ENCODE measurements at regions of chr2 and their contacts with region 1.

Region 1: DNA sequence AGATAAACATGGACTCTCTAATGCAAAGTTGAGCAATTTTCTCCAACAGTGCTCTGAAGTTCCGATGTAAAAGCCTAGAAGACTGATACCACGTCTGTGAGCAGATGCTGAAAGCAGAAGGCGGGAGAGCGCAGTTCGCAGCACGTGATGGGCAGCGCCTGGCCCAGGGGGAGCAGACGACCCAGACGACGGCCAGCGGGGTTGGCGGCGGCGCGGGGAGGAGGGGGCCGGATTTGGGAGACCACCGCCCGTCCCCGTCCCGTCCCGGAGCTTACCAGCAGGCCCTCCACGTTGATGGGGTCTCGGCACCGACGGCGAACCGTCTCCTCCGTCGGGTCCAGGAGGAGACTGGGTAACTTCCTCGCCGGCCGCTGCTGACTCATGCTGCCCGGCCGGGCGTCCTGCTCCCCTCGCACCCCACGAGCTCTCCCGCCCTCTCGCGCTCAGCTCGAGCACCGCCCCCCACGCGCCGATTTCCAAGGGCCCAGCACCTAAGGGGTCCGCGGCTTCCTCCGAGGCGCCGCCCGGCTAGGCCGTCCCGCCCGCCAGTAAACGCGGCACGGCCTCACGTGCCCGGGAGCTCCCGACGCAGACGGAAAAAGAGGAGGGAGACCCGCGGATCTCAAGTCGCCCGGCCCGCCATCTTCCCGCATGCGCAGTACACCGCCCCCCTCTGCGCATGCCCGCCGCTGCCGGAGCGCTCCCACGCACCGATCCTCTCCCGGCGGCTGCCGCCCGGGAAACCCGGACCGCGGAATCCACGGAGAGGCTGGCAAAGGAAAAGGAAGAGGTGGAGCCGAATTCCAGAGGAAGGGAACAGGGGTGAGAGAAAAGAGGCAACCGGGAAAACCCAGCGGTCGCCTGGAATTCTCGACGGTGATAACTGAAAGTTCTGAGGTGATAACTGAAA is at the start of gene E2F6:
- DNase-seq: peak; percentile 89
- H3K4me3 Mint-ChIP-seq: peak within 1 kb of the TSS; percentile 91
- H3K27ac Mint-ChIP-seq: peak within 1 kb of the TSS; percentile 83
- H3K4me1 Mint-ChIP-seq: peaks cover 40% of the 10 kb centered on the region
- H3K27me3 Mint-ChIP-seq: no peaks in the 10 kb centered on the region
- total RNA-seq, gene E2F6: 8.7 to 9.4 TPM

Region 2: GRCh38 chr2:11214770-11215169 is 251.0 kb before region 1 on chr2:
- CTCF ChIA-PET with region 1: no interaction called
- intact Hi-C with region 1: no loop called
- DNase-seq: no peak
- H3K4me3 Mint-ChIP-seq: no peak overlapping the region
- H3K27ac Mint-ChIP-seq: no peak overlapping the region
- H3K4me1 Mint-ChIP-seq: no peaks in the 10 kb centered on the region
- H3K27me3 Mint-ChIP-seq: no peaks in the 10 kb centered on the region

Region 3: DNA sequence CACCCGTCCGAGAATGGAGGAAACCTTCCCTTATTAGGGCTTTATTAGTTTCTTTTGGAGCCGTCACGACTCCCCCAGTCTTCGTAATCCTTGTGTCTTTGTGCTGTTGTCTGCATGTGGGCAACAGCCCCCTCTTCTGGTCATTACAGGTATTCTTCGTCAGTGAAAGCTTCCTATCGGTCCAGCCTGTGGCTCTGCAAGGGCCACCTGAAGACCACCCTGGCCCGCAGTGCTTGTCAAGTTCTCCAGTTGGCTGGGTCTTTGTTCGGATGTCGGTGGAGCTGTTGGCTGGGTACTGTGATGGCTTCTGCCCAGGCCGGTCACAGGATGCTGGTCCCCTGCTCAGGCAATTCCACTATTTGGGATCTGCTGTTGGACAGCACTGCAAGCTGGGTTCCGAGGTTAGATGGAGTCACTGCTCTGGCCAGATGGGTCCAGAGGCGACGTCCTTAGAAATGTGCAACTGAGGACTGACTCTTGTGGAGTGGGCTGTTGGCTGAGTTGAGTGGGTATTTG is 19.0 kb before region 1 on chr2:
- CTCF ChIA-PET with region 1: interaction called, 11 read pairs
- intact Hi-C with region 1: no loop called
- DNase-seq: peak; percentile 60
- H3K4me3 Mint-ChIP-seq: no peak overlapping the region
- H3K27ac Mint-ChIP-seq: no peak overlapping the region
- H3K4me1 Mint-ChIP-seq: no peaks in the 10 kb centered on the region
- H3K27me3 Mint-ChIP-seq: no peaks in the 10 kb centered on the region

Region 4: GRCh38 chr2:11743846-11744553 is 278.2 kb after region 1 on chr2:
- CTCF ChIA-PET with region 1: no interaction called
- intact Hi-C with region 1: loop called (anchors 5 kb)
- DNase-seq: peak; percentile 92
- H3K4me3 Mint-ChIP-seq: no peak overlapping the region
- H3K27ac Mint-ChIP-seq: peak overlapping the region; percentile 69
- H3K4me1 Mint-ChIP-seq: peaks cover 47% of the 10 kb centered on the region
- H3K27me3 Mint-ChIP-seq: no peaks in the 10 kb centered on the region

Measured in activated naive CD4-positive, alpha-beta T cell treated with anti-CD3 and anti-CD28 coated beads for 36 hours (primary cell).